ENCODE measurements at regions of chr12 and their contacts with region 1.

Region 1: DNA sequence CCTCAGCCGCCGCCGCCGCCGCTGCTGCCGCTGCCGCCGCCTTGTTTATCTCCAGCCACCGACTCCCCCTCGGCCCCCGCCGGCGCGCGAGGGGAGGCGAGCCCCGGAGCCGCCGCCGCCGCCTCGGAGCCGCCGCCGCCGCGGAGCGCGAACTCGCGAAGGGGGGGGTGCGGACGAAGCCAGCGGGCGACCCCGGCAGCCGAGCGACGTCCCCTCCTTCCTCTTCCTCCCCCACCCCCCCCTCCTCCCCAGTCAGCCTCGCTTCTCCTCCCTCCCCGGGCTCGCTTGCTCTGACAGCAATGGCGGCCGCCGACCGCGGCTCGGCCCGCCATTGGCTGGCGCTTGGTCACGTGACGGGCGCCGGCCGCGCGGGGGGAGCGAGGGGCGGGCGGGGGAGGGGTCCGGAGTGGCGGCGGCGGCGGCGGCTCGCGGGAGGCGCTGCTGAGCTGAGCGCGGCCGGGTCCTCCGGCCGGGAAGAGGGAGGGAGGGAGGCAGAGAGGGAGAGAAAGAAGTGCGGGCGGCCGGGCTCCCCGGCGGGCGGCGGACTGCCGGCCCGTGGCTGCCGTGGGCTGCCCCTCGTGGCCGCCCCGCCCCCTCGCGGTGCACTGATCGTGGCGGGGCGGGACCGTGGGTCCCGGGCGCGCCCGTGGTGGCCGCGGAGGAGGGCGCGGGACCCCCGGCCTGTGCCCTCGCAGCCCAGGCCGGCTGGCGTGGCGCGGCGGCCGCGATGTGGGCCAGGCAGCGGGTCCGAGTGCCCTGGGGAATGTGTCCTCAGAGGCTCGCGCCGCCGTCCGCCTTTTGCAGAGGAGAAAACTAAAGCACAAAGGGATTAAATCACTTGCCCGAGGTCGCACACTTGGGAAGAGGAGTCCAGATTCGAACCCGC is at the start of gene MED13L:
- DNase-seq: peak; percentile 93 to 96
- ATAC-seq: peak; percentile 94
- H3K4me3 ChIP-seq: peak within 1 kb of the TSS; percentile 94 to 98
- H3K27ac ChIP-seq: peak within 1 kb of the TSS; percentile 86 to 94
- H3K4me1 ChIP-seq: no peaks in the 10 kb centered on the region
- H3K27me3 ChIP-seq: no peaks in the 10 kb centered on the region
- total RNA-seq, gene MED13L: 198 to 215 TPM

Region 2: DNA sequence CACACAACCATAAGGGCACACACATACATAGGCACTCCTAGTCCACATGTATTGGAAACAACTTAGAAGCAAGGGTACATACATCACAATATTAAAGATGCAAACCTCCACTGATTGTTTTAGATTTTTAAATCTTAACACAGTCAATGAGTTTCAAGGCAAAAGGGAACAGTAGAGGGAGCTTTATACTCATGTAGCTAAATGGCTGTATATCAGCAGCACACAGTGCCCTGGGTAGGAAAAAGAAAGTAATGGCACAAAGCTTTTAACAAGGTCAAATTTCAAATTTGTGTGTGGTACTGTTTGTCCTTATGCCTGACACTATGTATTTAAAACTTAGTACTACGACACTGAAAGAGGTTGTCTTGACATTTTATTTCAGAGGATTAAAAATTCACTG is 262.1 kb before region 1 on chr12:
- intact Hi-C with region 1: loop called in 1 of 2 experiments (anchors 10 kb)
- DNase-seq: no peak
- ATAC-seq: no peak
- H3K4me3 ChIP-seq: no peak overlapping the region
- H3K27ac ChIP-seq: no peak overlapping the region
- H3K4me1 ChIP-seq: peaks cover 0 to 1% of the 10 kb centered on the region in 2 donors
- H3K27me3 ChIP-seq: no peaks in the 10 kb centered on the region

Region 3: GRCh38 chr12:116319898-116320621 is 42.4 kb after region 1 on chr12:
- intact Hi-C with region 1: loop called in 1 of 2 experiments (anchors 2 kb)
- DNase-seq: peak in 1 of 2 donors; percentile 86
- ATAC-seq: peak; percentile 93
- H3K4me3 ChIP-seq: no peak overlapping the region
- H3K27ac ChIP-seq: peak overlapping the region; percentile 91 to 98
- H3K4me1 ChIP-seq: peaks cover 0 to 7% of the 10 kb centered on the region in 2 donors
- H3K27me3 ChIP-seq: no peaks in the 10 kb centered on the region

Region 4: GRCh38 chr12:116426391-116427136 is 148.9 kb after region 1 on chr12:
- intact Hi-C with region 1: loop called (anchors 5 kb)
- DNase-seq: peak; percentile 86 to 91
- ATAC-seq: peak; percentile 91
- H3K4me3 ChIP-seq: no peak overlapping the region
- H3K27ac ChIP-seq: peak overlapping the region in 1 of 2 donors; percentile 56
- H3K4me1 ChIP-seq: no peaks in the 10 kb centered on the region
- H3K27me3 ChIP-seq: no peaks in the 10 kb centered on the region

Region 5: GRCh38 chr12:116434155-116435011 is 156.7 kb after region 1 on chr12:
- intact Hi-C with region 1: loop called (anchors 5 kb)
- DNase-seq: peak; percentile 94 to 95
- ATAC-seq: peak; percentile 96
- H3K4me3 ChIP-seq: no peak overlapping the region
- H3K27ac ChIP-seq: peak overlapping the region in 1 of 2 donors; percentile 97
- H3K4me1 ChIP-seq: no peaks in the 10 kb centered on the region
- H3K27me3 ChIP-seq: no peaks in the 10 kb centered on the region

Region 6: GRCh38 chr12:116525418-116526001 is 247.9 kb after region 1 on chr12:
- intact Hi-C with region 1: loop called (anchors 5 to 10 kb)
- DNase-seq: peak; percentile 90 to 91
- ATAC-seq: peak; percentile 94
- H3K4me3 ChIP-seq: no peak overlapping the region
- H3K27ac ChIP-seq: peak overlapping the region; percentile 72 to 90
- H3K4me1 ChIP-seq: peaks cover 2 to 12% of the 10 kb centered on the region in 2 donors
- H3K27me3 ChIP-seq: no peaks in the 10 kb centered on the region

Region 7: DNA sequence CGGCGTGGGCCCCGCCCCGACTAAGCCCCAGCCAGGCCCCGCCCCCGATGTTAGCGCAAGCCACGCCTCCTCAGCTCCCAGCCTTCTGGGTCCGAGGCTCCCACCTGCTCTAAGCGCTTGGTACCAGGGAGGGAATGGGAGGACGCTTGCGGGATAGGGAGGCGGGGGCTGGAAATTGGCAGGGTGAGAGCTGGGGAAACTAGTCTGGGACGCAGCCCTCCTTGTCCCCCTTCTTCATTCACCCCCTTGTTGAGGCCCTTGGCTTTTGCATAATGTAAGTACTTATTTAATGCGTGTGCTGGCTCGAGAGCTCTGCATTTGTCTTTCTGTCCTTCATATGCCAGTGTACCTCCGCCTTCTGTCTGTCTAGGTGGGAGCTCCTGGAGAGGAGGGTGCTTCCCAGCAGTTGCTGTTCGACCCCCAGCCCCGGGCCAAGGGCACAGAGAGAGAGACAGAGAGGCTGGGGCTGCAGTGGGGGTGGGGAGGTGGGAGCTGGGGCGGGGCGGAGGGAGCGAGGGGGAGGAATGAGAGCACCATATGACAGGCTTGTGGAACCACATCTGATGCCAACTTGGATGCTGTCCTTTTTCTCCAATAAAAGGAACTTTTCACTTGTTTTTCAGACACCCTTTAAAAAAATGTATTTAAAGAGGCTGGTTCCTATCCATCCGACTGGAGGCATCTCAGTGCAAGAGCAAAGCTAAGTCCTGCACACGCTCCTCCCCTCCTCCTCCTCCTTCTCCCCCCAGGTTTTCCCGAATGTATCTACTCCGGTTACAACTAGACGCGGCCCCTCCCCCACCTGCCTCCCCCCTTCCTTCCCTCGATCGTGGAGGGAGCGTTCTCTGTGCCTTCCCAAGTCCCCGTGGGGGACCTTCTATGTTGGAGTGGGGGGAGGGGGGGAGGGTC is 256.0 kb after region 1 on chr12:
- intact Hi-C with region 1: loop called (anchors 5 to 10 kb)
- DNase-seq: peak; percentile 84 to 93
- ATAC-seq: peak; percentile 85
- H3K4me3 ChIP-seq: peak overlapping the region; percentile 38 to 90
- H3K27ac ChIP-seq: peak overlapping the region in 1 of 2 donors; percentile 37
- H3K4me1 ChIP-seq: peaks cover 1 to 5% of the 10 kb centered on the region in 2 donors
- H3K27me3 ChIP-seq: no peaks in the 10 kb centered on the region

Measured in aorta (tissue), 5 donors.